Caco-2 (cell line): ENCODE measurements at regions of chr4 and their contacts with region 1.

Region 1: GRCh38 chr4:147866532-147867271 is 134.8 kb downstream of the ARHGAP10 start:
- DNase-seq: peak; percentile 85 to 86
- H3K4me3 ChIP-seq: no peak overlapping the region
- H3K4me3 Mint-ChIP-seq: no peak overlapping the region
- H3K27ac Mint-ChIP-seq: no peak overlapping the region
- H3K4me1 ChIP-seq: no peaks in the 10 kb centered on the region
- H3K4me1 Mint-ChIP-seq: no peaks in the 10 kb centered on the region
- H3K27me3 ChIP-seq: no peaks in the 10 kb centered on the region
- H3K27me3 Mint-ChIP-seq: no peaks in the 10 kb centered on the region
- CTCF ChIP-seq: peak; percentile 97 to 98

Region 2: DNA sequence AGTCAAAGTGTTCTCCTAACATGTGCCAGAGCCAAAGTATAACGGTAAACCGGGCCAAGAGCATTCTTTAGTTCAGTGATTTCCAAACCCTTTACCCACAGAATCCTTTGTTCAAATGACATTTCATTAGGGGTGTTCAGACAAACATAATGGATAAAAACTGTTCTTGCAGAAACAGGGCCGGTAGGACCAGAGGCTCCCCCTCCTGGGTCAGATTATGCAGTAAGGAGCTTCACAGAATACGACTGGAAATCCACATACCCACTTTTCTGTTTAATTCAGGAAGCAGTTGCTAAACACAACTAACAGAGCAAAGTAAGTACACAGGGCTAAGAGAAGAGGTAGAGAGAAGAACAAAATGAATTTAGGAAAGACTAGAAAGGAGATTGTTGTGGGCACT is 296.1 kb before region 1 on chr4:
- CTCF ChIA-PET with region 1: interaction called, 10 read pairs
- POLR2A ChIA-PET with region 1: no interaction called
- intact Hi-C with region 1: no loop called
- DNase-seq: no peak
- H3K4me3 ChIP-seq: no peak overlapping the region
- H3K4me3 Mint-ChIP-seq: no peak overlapping the region
- H3K27ac Mint-ChIP-seq: no peak overlapping the region
- H3K4me1 ChIP-seq: no peaks in the 10 kb centered on the region
- H3K4me1 Mint-ChIP-seq: peaks cover 7% of the 10 kb centered on the region
- H3K27me3 ChIP-seq: no peaks in the 10 kb centered on the region
- H3K27me3 Mint-ChIP-seq: peaks cover 5% of the 10 kb centered on the region
- CTCF ChIP-seq: no peak

Region 3: DNA sequence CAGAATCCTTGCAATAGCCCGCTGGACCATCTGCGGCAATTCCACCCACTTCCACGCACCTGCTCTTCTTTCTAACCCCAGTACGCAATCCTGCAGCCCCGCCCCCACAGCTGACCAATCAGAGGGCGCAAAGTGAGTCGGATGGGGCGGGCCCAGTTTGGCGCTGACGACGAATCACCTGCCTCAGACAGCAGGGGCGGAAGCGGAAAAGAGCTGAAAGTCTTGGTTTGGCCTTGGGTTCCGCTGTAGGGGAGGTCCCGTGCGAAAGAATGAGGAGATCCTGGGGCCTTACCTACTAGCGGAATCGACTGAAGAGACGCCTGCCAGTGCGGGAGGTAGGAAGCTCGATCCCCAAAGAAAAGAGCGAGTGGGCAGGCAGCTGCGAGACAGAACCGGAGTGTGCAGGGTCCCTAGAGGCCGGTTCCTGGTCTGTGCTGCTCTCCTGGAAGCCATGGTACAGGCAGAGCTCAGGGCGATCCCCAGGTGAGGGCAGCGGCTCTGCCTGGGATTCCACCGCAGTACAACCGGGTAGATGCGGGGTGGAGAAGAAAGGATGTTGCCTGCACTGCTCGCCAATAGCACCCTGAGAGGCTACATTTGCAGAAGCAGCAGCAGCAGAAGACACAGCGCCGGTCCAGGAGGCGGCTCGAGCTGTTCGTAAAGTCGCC is 249.4 kb before region 1 on chr4 and contains the start of gene TMEM184C:
- CTCF ChIA-PET with region 1: interaction called, 36 read pairs
- POLR2A ChIA-PET with region 1: no interaction called
- intact Hi-C with region 1: loop called (anchors 1 kb)
- DNase-seq: peak; percentile 97
- H3K4me3 ChIP-seq: peak within 1 kb of the TSS; percentile 72
- H3K4me3 Mint-ChIP-seq: peak within 1 kb of the TSS; percentile 99
- H3K27ac Mint-ChIP-seq: peak within 1 kb of the TSS; percentile 97
- H3K4me1 ChIP-seq: peaks cover 5% of the 10 kb centered on the region
- H3K4me1 Mint-ChIP-seq: peaks cover 11% of the 10 kb centered on the region
- H3K27me3 ChIP-seq: no peaks in the 10 kb centered on the region
- H3K27me3 Mint-ChIP-seq: no peaks in the 10 kb centered on the region
- CTCF ChIP-seq: peak in 1 of 2 experiments; percentile 1
- total RNA-seq, gene TMEM184C: 36.2 and 38.1 TPM in 2 replicates

Region 4: DNA sequence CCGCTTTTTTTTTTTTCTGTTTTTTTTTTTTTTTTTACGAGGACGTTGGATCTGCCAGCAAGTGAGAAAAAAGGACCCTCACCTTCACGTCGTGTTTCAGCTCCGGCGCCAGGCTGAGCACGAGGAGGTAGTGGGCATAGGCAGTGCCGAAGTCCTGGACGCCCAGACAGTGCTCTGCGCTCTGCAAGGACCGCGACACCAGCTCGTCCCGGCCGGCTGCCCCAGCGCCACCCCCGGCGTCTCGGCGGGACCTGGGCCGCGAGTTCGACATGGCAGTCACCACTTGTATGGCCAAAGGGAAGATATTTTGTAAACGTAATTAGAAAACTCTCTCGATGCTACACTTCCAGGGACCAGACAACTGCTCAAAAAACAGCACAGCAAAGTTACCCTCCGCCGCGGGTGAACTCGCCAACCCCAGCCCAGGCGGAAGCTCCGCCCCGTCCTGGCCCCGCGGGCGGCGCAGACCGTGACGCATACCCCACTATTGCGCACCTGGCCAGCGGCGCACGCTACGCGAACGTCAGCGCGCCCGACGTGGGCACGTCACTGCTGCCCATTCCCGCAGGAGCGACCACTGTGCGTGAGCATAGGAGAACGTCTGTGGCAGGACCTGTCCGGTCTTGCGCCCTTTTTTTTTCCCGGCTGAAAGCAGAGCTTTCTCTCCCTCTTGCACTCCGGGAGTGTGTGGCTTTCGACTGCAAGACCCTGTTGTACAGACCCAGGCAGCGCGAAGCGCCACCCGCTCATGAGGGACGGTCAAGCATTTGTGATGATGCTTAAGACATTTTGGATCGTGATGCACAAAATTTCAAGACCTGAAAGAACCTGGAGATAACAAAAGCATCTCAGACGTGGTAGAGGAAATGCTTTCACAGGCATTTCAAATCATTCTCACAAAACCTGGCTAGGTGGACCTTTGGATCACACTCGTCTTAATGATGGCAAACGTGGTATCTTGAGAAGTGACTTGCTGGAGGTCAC is 182.7 kb before region 1 on chr4 and contains the start of gene PRMT9:
- CTCF ChIA-PET with region 1: interaction called, 20 read pairs
- POLR2A ChIA-PET with region 1: no interaction called
- intact Hi-C with region 1: no loop called
- DNase-seq: peak; percentile 91 to 92
- H3K4me3 ChIP-seq: peak within 1 kb of the TSS; percentile 74
- H3K4me3 Mint-ChIP-seq: peak within 1 kb of the TSS; percentile 90
- H3K27ac Mint-ChIP-seq: peak within 1 kb of the TSS; percentile 85
- H3K4me1 ChIP-seq: peaks cover 8% of the 10 kb centered on the region
- H3K4me1 Mint-ChIP-seq: no peaks in the 10 kb centered on the region
- H3K27me3 ChIP-seq: no peaks in the 10 kb centered on the region
- H3K27me3 Mint-ChIP-seq: no peaks in the 10 kb centered on the region
- CTCF ChIP-seq: no peak
- total RNA-seq, gene PRMT9: 7.5 and 8.6 TPM in 2 replicates

Region 5: GRCh38 chr4:147707865-147708672 is 158.6 kb before region 1 on chr4:
- CTCF ChIA-PET with region 1: interaction called, 11 read pairs
- POLR2A ChIA-PET with region 1: no interaction called
- intact Hi-C with region 1: loop called (anchors 1 kb)
- DNase-seq: peak in 1 of 2 experiments; percentile 56
- H3K4me3 ChIP-seq: no peak overlapping the region
- H3K4me3 Mint-ChIP-seq: no peak overlapping the region
- H3K27ac Mint-ChIP-seq: no peak overlapping the region
- H3K4me1 ChIP-seq: no peaks in the 10 kb centered on the region
- H3K4me1 Mint-ChIP-seq: peaks cover 7% of the 10 kb centered on the region
- H3K27me3 ChIP-seq: no peaks in the 10 kb centered on the region
- H3K27me3 Mint-ChIP-seq: no peaks in the 10 kb centered on the region
- CTCF ChIP-seq: peak; percentile 71 to 81

Region 6: GRCh38 chr4:147831551-147832177 is 35.0 kb before region 1 on chr4:
- CTCF ChIA-PET with region 1: interaction called, 11 read pairs
- POLR2A ChIA-PET with region 1: no interaction called
- intact Hi-C with region 1: no loop called
- DNase-seq: no peak
- H3K4me3 ChIP-seq: no peak overlapping the region
- H3K4me3 Mint-ChIP-seq: no peak overlapping the region
- H3K27ac Mint-ChIP-seq: peak overlapping the region; percentile 49
- H3K4me1 ChIP-seq: peaks cover 11% of the 10 kb centered on the region; the same call in 1 of the 2 replicates
- H3K4me1 Mint-ChIP-seq: peaks cover 19% of the 10 kb centered on the region
- H3K27me3 ChIP-seq: no peaks in the 10 kb centered on the region
- H3K27me3 Mint-ChIP-seq: no peaks in the 10 kb centered on the region
- CTCF ChIP-seq: no peak